Esophagus squamous epithelium (tissue), 5 donors: ENCODE measurements at regions of chr1 and their contacts with region 1.

Region 1: DNA sequence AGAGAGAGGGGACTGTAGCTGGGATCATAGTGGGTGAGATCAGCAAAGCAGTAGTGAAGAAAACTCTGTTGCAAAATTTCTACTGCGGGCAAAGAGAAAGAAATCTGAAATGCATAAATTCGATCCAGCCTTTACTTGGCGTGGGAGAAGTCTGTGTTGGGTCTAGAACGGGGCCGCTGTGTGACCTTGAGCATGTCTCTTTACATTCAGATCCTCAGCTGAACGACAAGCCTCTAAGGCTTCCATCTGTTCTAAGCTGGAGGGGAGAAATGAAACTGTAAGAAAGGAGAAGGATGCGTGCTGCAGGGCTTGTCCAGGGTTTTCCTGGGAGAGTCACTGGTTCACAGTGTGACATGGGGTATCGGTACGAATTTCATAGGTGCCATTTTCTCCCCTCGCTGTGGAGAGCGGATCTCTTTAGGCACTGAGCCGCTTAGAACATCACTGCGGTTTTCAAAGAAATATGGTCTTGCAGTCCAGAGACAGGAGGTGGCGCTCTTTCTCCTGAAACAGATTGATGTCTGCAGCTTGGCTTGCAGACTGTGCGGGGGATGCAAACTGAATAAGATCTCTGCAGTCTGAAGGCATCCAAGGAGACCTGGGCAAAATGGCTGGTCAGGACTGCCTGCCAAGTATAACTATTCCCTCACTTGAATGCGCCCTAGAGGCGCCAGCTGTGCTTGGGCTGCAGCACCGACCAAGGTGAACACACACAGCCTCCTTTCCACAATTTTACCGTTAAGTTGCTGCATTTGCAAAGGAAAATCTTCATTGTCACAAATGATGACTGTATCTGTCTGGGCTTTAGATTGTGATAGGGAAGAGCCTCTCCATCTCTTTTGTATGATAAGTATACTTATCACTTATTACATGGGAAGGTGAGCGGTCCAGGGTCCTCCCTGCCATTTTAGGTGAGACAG is 104.1 kb downstream of the XCL2 start:
- DNase-seq: no peak
- H3K4me3 ChIP-seq: peak overlapping the region in 1 of 4 donors; percentile 46
- H3K27ac ChIP-seq: no peak overlapping the region
- H3K4me1 ChIP-seq: peaks cover 0 to 13% (median 3%) of the 10 kb centered on the region in 3 donors
- H3K27me3 ChIP-seq: no peaks in the 10 kb centered on the region
- CTCF ChIP-seq: peak in 5 of 6 experiments; percentile 54 to 84 (median 70)
- POLR2A ChIP-seq: no peak

Region 2: DNA sequence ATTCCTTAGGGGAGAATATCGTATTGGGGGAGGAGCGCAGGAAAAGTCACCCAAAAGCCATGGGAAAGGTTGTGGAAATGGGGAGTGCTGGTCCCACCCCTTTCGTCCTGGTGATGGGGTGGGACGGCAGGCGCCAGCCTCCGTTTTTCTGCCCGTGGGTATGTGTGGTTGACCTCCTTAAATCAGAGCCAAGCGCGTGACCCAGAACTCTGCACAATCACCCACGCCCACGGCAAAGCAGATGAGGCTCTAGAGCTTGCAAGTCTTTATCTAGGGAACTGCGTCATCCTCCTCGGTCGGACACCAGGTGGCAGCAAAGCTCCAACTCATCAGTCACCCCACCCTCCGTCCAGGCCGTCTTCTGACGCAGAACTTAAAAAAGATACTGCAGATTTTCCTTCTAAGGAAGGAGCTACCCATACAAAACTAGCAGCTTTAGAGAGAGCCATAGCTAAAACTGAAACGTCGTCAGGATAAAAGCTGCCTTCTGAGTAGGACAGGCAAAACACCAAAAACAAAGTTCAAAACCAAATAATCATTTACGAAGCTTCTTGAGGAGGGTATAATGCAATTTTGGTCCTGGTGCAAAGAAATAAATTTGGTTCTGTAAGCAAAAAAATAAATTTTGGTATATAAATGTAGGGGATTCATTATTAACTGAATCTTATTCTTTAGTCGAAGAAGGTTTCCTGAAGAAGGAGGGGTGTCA is 97.0 kb before region 1 on chr1:
- intact Hi-C with region 1: no loop called
- DNase-seq: peak; percentile 46
- H3K4me3 ChIP-seq: peak overlapping the region in 1 of 4 donors; percentile 46
- H3K27ac ChIP-seq: peak overlapping the region in 3 of 4 donors; percentile 3 to 29 (median 5)
- H3K4me1 ChIP-seq: peaks cover 6 to 12% (median 7%) of the 10 kb centered on the region in 3 donors
- H3K27me3 ChIP-seq: no peaks in the 10 kb centered on the region
- CTCF ChIP-seq: peak; percentile 68 to 87 (median 82)
- POLR2A ChIP-seq: no peak

Region 3: DNA sequence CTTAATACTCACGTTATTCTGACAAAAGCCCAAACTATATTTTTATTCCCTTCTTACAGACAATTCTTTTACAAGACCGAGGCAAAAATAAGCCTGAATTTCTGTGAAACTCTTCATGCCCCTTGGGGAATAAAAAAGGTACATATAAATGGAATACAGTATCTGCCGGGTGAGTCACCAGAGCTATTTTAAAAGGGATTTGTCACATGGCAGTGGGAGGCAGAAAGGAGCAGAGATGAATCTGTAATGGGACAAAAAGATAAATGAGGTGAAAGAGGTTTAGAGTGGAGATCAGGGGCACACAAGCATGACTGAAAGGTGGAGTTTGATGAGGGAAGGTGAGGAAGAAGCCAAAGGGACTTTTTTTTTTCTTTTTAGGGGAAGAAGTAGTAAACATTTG is 145.5 kb after region 1 on chr1:
- intact Hi-C with region 1: loop called (anchors 10 kb)
- DNase-seq: no peak
- H3K4me3 ChIP-seq: no peak overlapping the region
- H3K27ac ChIP-seq: no peak overlapping the region
- H3K4me1 ChIP-seq: no peaks in the 10 kb centered on the region
- H3K27me3 ChIP-seq: no peaks in the 10 kb centered on the region
- CTCF ChIP-seq: no peak
- POLR2A ChIP-seq: no peak